ENCODE measurements at regions of chr21 and their contacts with region 1.

Region 1: DNA sequence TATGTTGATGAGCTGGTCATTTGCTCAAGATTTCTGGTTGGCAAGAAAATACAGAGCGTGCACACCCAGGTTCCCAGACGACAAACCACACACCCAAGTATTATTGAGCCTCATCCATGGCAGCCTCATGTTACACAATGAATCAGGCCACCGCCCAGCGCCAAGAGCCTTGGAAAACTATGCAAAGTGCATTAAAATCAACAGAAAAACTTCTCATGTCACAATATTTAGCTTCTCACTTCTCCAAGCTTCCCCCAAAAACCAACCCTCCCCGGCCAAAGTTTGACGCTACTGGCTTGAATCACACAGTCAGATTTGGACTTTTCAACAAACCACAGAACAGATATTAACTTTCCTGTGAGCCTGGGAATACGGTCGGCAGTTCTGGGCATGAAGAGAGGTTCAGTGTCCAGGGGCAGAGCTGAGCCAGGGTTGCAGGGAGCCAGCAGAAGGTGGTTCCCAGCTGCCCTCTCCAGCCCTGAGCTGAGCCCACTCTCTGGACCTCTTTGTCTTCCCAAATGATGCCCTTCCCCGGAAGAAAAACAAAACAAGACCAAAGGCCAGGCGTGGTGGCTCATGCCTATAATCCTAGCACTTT is 71.1 kb downstream of the SETD4 start:
- DNase-seq: no peak
- ATAC-seq: peak; percentile 56
- H3K4me3 ChIP-seq: peak overlapping the region in 1 of 3 experiments; percentile 48; a peak in 2 of 6 replicates
- H3K27ac ChIP-seq: no peak overlapping the region
- H3K4me1 ChIP-seq: peaks cover 74% of the 10 kb centered on the region
- H3K27me3 ChIP-seq: no peaks in the 10 kb centered on the region
- CTCF ChIP-seq: no peak
- EP300 ChIP-seq: no peak
- POLR2A ChIP-seq: no peak
- RAD21 ChIP-seq: no peak

Region 2: GRCh38 chr21:35783721-35784120 is 205.5 kb before region 1 on chr21:
- CTCF ChIA-PET with region 1: no interaction called
- POLR2A ChIA-PET with region 1: no interaction called
- in situ Hi-C with region 1: no loop called
- intact Hi-C with region 1: no loop called
- DNase-seq: no peak
- ATAC-seq: no peak
- H3K4me3 ChIP-seq: no peak overlapping the region
- H3K27ac ChIP-seq: no peak overlapping the region
- H3K4me1 ChIP-seq: no peaks in the 10 kb centered on the region
- H3K27me3 ChIP-seq: no peaks in the 10 kb centered on the region; a peak in 1 of 5 replicates
- CTCF ChIP-seq: no peak
- EP300 ChIP-seq: no peak
- POLR2A ChIP-seq: no peak
- RAD21 ChIP-seq: no peak

Region 3: DNA sequence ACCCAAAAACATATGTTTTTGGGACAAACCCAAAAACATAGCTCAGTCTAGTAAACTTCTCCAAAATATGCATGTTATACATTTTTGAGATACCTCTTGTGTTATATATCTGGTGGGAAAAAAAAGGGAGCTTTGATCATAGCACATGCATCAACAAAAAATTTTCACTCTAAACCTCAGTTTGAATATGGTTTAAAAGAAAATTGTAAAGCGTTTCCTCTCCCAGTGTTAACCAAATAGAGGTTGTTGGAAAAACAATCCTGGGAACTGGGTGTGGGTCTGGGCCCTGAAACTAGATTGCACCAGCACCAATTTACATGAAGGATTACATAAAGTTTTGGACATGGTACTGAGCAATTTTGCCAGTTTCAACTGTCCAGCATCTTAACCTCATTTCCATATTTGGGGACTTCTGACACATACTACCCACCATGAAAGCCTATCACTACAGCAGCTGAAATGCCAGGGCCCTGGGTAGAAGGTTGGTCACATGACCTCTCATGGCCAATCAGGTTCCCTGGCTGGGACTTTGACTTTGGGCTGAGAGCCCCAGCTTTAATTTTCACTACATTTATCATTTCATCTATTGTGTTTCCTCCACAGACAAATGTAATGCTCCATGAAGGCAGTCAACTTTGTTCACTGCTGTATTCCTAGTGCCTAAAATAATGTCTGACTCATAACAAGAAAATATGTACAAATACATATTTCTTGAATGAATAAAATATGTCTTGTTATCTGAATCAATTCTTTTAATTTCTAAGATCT is 79.6 kb before region 1 on chr21:
- CTCF ChIA-PET with region 1: no interaction called
- POLR2A ChIA-PET with region 1: no interaction called
- in situ Hi-C with region 1: no loop called
- intact Hi-C with region 1: no loop called
- DNase-seq: no peak
- ATAC-seq: no peak
- H3K4me3 ChIP-seq: no peak overlapping the region
- H3K27ac ChIP-seq: no peak overlapping the region
- H3K4me1 ChIP-seq: no peaks in the 10 kb centered on the region
- H3K27me3 ChIP-seq: no peaks in the 10 kb centered on the region
- CTCF ChIP-seq: no peak
- EP300 ChIP-seq: no peak
- POLR2A ChIP-seq: no peak
- RAD21 ChIP-seq: no peak

Region 4: DNA sequence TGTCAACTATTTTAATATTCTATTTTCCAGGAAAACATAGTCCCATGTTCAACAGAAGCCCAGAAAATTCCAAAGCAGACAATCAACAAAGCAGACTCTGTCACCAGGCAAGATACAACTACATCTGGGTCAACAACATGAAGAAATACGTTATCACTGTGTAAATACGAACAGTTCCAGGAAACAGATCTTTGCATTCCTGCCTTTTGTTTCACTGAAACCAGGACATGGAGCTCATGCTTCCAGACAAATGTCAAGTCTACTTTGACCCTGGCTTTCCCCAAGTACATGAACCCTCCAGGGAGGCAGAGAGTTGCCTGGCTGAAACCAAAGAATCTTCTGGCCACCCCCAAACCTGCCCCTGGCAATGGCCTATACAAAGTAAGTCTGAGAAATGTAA is 35.6 kb before region 1 on chr21:
- CTCF ChIA-PET with region 1: no interaction called
- POLR2A ChIA-PET with region 1: interaction called, 5 read pairs
- in situ Hi-C with region 1: no loop called
- intact Hi-C with region 1: loop called (anchors 5 kb)
- DNase-seq: peak; percentile 95
- ATAC-seq: peak; percentile 95
- H3K4me3 ChIP-seq: 0 out of 6 replicates have a peak overlapping the region, but pooled peaks of 1 of the 3 experiments have one; percentile 13
- H3K27ac ChIP-seq: peak overlapping the region; percentile 51
- H3K4me1 ChIP-seq: peaks cover 45% of the 10 kb centered on the region
- H3K27me3 ChIP-seq: no peaks in the 10 kb centered on the region
- CTCF ChIP-seq: no peak
- EP300 ChIP-seq: peak; percentile 80 to 99; a peak in 3 of 4 replicates
- POLR2A ChIP-seq: no peak
- RAD21 ChIP-seq: no peak

Measured in HepG2 (cell line).